ENCODE measurements at regions of chr14 and their contacts with region 1.

Region 1: GRCh38 chr14:72996919-72997318 is 30.0 kb downstream of the ZFYVE1 start:
- DNase-seq: no peak

Region 2: DNA sequence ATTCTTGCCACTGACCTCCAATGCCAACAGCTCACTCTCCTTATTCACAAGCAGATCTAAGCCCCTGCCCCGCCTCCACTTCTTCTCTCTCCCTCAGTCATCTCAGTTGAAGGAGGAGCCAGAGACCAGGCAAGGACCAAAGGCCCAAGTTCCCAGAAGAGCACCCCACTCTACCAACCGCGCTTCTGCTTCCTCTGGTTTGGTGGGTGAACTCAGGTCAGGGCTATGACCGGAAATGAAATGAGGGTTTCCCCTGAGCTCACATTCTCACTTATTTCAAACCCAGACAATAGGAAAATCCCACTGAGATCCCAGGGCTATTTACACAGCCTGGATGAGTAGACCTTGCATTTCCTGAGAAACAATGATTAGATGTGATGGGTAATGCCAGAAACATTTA is 113.0 kb before region 1 on chr14:
- intact Hi-C with region 1: no loop called
- DNase-seq: no peak

Region 3: DNA sequence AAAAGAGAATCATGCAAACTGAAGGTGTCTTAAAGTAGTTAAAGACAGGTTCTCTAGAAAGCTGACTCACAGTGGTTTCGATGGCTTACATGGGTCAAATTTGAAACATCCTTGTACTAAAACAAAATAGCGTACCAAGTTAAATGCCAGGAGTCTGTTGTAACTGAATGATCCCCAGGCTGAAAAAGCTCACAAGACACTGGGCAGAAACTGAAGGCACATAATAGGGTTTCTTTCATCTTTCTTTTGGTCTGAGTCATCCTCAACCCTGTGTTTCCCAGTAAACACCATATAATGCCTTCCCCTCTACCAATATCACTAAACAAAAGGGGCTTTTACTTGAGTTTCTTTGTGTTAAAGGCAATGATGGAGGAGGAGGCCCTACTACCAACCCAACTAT is 17.2 kb after region 1 on chr14:
- intact Hi-C with region 1: loop called in 1 of 2 experiments (anchors 1 kb)
- DNase-seq: no peak